H1 (cell line): ENCODE measurements at regions of chr4 and their contacts with region 1.

Region 1: GRCh38 chr4:170259631-170260153 is 169.9 kb upstream of the AADAT start:
- DNase-seq: peak; percentile 84 to 89
- H3K4me3 ChIP-seq: no peak overlapping the region
- H3K27ac ChIP-seq: no peak overlapping the region
- H3K4me1 ChIP-seq: no peaks in the 10 kb centered on the region
- H3K27me3 ChIP-seq: no peaks in the 10 kb centered on the region
- CTCF ChIP-seq: peak; percentile 56 to 99 (median 97)
- EP300 ChIP-seq: no peak
- POLR2A ChIP-seq: no peak
- RAD21 ChIP-seq: peak; percentile 99

Region 2: DNA sequence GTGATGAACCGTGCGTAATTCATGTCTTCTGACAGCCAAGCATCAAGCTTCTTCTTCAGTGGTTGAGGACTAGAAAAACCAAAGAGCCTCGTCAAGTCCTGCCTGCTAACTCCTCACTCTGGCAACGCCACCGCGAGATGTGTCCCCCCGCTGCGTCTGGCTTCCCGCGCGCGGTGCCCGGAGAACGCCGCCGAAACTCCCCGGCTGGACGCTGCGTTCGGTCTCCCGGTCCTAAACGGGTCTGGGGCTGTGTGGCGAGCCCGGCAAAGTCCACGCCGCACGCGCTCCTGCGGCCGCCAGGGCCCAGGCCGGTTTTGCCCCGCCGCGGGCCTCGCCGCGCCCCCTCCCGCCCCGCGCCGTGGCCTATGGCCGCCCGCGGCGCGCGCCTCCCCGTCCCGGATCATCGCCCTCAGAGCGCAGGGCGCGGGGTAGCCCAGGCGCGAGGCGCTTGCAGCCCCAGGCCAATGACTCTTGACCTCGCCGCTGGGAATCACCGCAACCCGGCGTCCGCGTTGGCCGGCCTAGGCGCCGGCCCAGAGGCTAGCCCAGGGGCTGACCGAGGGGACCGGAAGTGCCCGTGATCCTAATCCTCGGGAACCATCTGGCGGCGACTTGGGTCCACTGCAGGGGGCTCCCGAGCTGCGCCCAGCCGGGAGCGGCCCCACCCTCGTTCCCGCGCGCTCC is 169.9 kb before region 1 on chr4 and contains the start of gene AADAT:
- CTCF ChIA-PET with region 1: interaction called, 37 read pairs
- POLR2A ChIA-PET with region 1: no interaction called
- DNase-seq: peak; percentile 60 to 89
- H3K4me3 ChIP-seq: peak within 1 kb of the TSS; percentile 81 to 87 (median 82)
- H3K27ac ChIP-seq: peak within 1 kb of the TSS; percentile 25; the same call in 1 of the 2 replicates
- H3K4me1 ChIP-seq: peaks cover 0 to 7% (median 6%) of the 10 kb centered on the region in 4 experiments; a peak in 5 of 7 replicates
- H3K27me3 ChIP-seq: peaks cover 0 to 7% (median 4%) of the 10 kb centered on the region in 4 experiments; a peak in 4 of 7 replicates
- CTCF ChIP-seq: peak; percentile 68 to 81 (median 70)
- EP300 ChIP-seq: no peak
- POLR2A ChIP-seq: peak in 1 of 2 experiments; percentile 56; a peak in 1 of 3 replicates
- RAD21 ChIP-seq: peak; percentile 89 to 92
- total RNA-seq, gene AADAT: 7.7 and 9.2 TPM in 2 replicates

Region 3: DNA sequence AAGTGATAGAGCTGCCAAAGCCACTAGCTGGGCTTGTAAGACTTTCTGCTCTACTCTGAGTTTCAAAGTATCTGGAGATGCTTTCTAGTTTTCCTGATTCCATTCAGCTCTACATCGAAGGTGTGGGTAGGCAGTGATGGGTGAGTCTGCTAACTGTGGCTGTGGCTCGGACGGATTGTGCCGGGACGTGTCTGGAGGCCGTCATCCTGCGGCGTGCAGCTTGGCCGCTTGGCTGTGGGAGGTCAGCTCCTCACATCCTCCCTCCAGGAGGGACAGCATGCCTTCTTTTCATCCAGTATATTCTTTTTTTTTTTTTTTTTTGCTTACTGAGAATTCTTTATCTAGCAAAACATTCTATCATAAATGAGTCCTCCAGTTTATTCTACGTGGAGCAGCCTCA is 92.0 kb before region 1 on chr4:
- CTCF ChIA-PET with region 1: interaction called, 14 read pairs
- POLR2A ChIA-PET with region 1: no interaction called
- DNase-seq: no peak
- H3K4me3 ChIP-seq: no peak overlapping the region
- H3K27ac ChIP-seq: no peak overlapping the region
- H3K4me1 ChIP-seq: no peaks in the 10 kb centered on the region
- H3K27me3 ChIP-seq: no peaks in the 10 kb centered on the region
- CTCF ChIP-seq: no peak
- EP300 ChIP-seq: no peak
- POLR2A ChIP-seq: no peak
- RAD21 ChIP-seq: no peak

Region 4: GRCh38 chr4:170227928-170228327 is 31.8 kb before region 1 on chr4:
- CTCF ChIA-PET with region 1: interaction called, 16 read pairs
- POLR2A ChIA-PET with region 1: no interaction called
- DNase-seq: no peak
- H3K4me3 ChIP-seq: no peak overlapping the region
- H3K27ac ChIP-seq: no peak overlapping the region
- H3K4me1 ChIP-seq: peaks cover 0 to 4% (median 1%) of the 10 kb centered on the region in 4 experiments; a peak in 2 of 7 replicates
- H3K27me3 ChIP-seq: no peaks in the 10 kb centered on the region
- CTCF ChIP-seq: peak in 2 of 3 experiments; percentile 5 to 9; a peak in 1 of 4 replicates
- EP300 ChIP-seq: no peak
- POLR2A ChIP-seq: no peak
- RAD21 ChIP-seq: no peak; a peak in 1 of 4 replicates

Region 5: GRCh38 chr4:170270628-170271027 is 10.9 kb after region 1 on chr4:
- CTCF ChIA-PET with region 1: interaction called, 42 read pairs
- POLR2A ChIA-PET with region 1: no interaction called
- DNase-seq: no peak
- H3K4me3 ChIP-seq: no peak overlapping the region
- H3K27ac ChIP-seq: no peak overlapping the region
- H3K4me1 ChIP-seq: no peaks in the 10 kb centered on the region
- H3K27me3 ChIP-seq: no peaks in the 10 kb centered on the region
- CTCF ChIP-seq: no peak
- EP300 ChIP-seq: no peak
- POLR2A ChIP-seq: no peak
- RAD21 ChIP-seq: no peak

Region 6: GRCh38 chr4:170374770-170375169 is 115.1 kb after region 1 on chr4:
- CTCF ChIA-PET with region 1: interaction called, 72 read pairs
- POLR2A ChIA-PET with region 1: no interaction called
- DNase-seq: peak; percentile 33 to 65
- H3K4me3 ChIP-seq: no peak overlapping the region
- H3K27ac ChIP-seq: no peak overlapping the region
- H3K4me1 ChIP-seq: no peaks in the 10 kb centered on the region
- H3K27me3 ChIP-seq: no peaks in the 10 kb centered on the region
- CTCF ChIP-seq: peak; percentile 49 to 96 (median 94)
- EP300 ChIP-seq: no peak
- POLR2A ChIP-seq: no peak
- RAD21 ChIP-seq: peak; percentile 69 to 77